H1 (cell line): ENCODE measurements at regions of chr12 and their contacts with region 1.

Region 1: GRCh38 chr12:54294152-54294952 is 6.5 kb downstream of the NFE2 start:
- DNase-seq: peak in 1 of 2 experiments; percentile 94
- H3K4me3 ChIP-seq: no peak overlapping the region
- H3K27ac ChIP-seq: no peak overlapping the region
- H3K4me1 ChIP-seq: peaks cover 0 to 2% (median 0%) of the 10 kb centered on the region in 4 experiments; a peak in 1 of 7 replicates
- H3K27me3 ChIP-seq: peaks cover 0 to 4% (median 0%) of the 10 kb centered on the region in 4 experiments; a peak in 1 of 7 replicates
- CTCF ChIP-seq: peak; percentile 91 to 95 (median 93)
- EP300 ChIP-seq: no peak
- POLR2A ChIP-seq: no peak
- RAD21 ChIP-seq: peak; percentile 81 to 92

Region 2: GRCh38 chr12:54159140-54159539 is 135.2 kb before region 1 on chr12:
- CTCF ChIA-PET with region 1: no interaction called
- POLR2A ChIA-PET with region 1: no interaction called
- DNase-seq: peak; percentile 61 to 88
- H3K4me3 ChIP-seq: peak overlapping the region in 1 of 4 experiments; percentile 26; a peak in 1 of 8 replicates
- H3K27ac ChIP-seq: no peak overlapping the region
- H3K4me1 ChIP-seq: peaks cover 0 to 19% (median 13%) of the 10 kb centered on the region in 4 experiments; a peak in 6 of 7 replicates
- H3K27me3 ChIP-seq: peaks cover 0 to 16% (median 8%) of the 10 kb centered on the region in 4 experiments; a peak in 5 of 7 replicates
- CTCF ChIP-seq: peak; percentile 33 to 62 (median 57); a peak in 3 of 4 replicates
- EP300 ChIP-seq: no peak
- POLR2A ChIP-seq: no peak
- RAD21 ChIP-seq: peak; percentile 5 to 29; a peak in 2 of 4 replicates

Region 3: DNA sequence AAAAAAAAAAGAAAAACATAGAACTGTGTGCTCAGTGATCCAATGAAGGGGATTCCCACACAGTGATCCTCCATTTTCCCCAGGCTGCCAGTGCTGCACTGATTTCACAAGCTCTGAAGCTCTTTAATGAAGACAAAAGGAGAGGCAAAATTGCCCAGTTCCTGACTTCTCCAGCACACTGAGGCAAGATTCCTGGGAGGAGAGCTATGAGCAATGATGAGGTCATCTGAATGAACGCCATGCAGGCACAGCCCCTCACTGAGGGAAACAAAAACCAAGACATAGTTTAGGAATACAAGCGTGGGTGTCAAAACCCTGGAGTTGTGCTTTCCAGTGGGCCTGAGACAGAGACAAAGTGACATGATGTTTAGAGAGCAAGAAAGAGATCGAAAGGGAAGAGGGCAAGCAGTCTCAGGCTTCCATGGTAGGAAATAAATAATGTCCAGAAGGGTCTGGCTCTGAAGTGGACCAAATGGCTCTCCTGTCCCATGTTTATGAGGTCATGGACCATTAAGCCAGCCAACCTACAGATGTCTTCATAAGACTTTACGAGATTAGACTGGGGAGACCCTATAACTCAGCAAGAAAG is 64.6 kb before region 1 on chr12:
- CTCF ChIA-PET with region 1: interaction called, 10 read pairs
- POLR2A ChIA-PET with region 1: interaction called, 4 read pairs
- DNase-seq: no peak
- H3K4me3 ChIP-seq: no peak overlapping the region
- H3K27ac ChIP-seq: 0 out of 2 replicates have a peak overlapping the region, but pooled peaks have one; percentile 0
- H3K4me1 ChIP-seq: no peaks in the 10 kb centered on the region
- H3K27me3 ChIP-seq: no peaks in the 10 kb centered on the region
- CTCF ChIP-seq: no peak
- EP300 ChIP-seq: no peak
- POLR2A ChIP-seq: no peak
- RAD21 ChIP-seq: no peak

Region 4: DNA sequence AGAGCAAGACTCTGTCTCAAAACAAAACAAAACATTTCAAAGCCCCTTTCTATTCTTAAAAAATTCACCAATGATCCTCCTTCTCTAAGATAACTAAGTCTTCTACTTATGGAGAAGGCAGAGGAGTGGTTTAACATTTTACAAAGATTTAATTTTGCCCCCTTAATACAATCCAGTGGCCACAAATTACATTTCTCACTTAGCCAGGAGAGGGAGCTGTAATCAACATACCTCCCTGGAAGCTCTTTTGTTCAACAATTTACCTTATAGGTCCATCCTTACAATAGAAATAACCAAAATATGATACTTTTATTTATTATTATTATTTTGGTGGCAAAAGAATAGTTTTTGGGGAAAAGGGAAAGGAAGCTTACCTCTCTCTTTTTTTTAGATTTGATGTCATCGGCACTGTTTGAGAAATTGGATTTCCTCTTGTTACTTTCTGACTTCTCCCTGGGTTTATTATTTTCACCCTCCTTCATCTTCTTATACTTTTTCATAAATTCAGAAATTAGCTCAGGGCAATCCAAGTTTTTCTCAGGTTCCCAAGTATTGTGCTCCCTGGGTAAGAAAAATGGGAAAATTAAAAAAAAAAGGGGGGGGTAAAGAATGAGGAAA is 42.6 kb before region 1 on chr12:
- CTCF ChIA-PET with region 1: interaction called, 10 read pairs
- POLR2A ChIA-PET with region 1: interaction called, 1,006 read pairs
- DNase-seq: no peak
- H3K4me3 ChIP-seq: no peak overlapping the region
- H3K27ac ChIP-seq: no peak overlapping the region
- H3K4me1 ChIP-seq: no peaks in the 10 kb centered on the region
- H3K27me3 ChIP-seq: no peaks in the 10 kb centered on the region
- CTCF ChIP-seq: peak in 2 of 3 experiments; percentile 41 to 55; a peak in 2 of 4 replicates
- EP300 ChIP-seq: no peak
- POLR2A ChIP-seq: no peak
- RAD21 ChIP-seq: peak; percentile 56 to 62

Region 5: DNA sequence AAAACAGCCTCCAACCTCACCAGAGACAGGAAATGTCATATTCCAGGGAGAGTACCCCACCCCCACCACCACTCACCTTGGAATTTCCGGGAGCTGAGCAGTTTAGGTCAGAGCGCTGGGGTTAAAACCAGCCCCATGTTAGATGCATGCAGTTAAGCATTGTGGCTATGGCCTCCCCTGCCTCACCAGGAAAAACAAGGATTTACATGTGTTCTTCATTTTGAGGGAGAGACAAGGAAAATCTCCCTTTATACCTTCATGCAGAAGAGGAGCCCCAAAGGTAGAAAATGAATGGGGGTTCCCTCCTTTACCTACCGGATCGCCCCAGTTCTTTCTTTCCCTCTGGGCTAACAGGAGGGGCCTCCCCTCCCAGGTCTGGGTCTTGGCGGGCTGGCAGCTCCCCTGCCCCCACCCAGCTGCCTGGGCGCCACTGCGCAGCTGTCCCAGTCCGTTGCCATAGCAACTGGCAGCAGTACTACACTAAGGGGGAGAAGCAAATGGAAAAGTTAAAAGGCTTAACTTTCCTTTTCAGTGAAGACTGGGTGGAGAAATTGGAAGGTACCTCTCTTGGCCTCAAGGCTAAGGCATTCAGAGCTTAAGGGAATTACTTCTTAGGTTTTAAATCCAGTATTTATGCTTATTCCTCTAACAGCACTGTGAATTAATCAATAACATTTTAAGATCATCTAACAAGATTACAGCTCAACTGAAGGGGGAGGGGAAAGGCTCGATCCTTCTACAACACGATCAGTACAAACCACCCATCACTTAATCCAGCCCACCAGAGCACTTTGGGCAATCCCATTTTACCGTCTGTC is 34.9 kb before region 1 on chr12:
- CTCF ChIA-PET with region 1: interaction called, 10 read pairs
- POLR2A ChIA-PET with region 1: interaction called, 1,006 read pairs
- DNase-seq: peak; percentile 89
- H3K4me3 ChIP-seq: peak overlapping the region; percentile 35 to 56 (median 46)
- H3K27ac ChIP-seq: peak overlapping the region; percentile 97
- H3K4me1 ChIP-seq: peaks cover 3 to 23% (median 15%) of the 10 kb centered on the region in 4 experiments
- H3K27me3 ChIP-seq: no peaks in the 10 kb centered on the region
- CTCF ChIP-seq: no peak
- EP300 ChIP-seq: peak; percentile 59 to 84; a peak in 2 of 3 replicates
- POLR2A ChIP-seq: peak; percentile 84 to 85
- RAD21 ChIP-seq: 0 out of 4 replicates have a peak, but pooled peaks of 1 of the 2 experiments have one; percentile 10

Region 6: GRCh38 chr12:54324617-54325441 is 30.5 kb after region 1 on chr12 and contains the start of gene COPZ1:
- CTCF ChIA-PET with region 1: interaction called, 618 read pairs
- POLR2A ChIA-PET with region 1: interaction called, 19 read pairs
- DNase-seq: peak; percentile 87 to 97
- H3K4me3 ChIP-seq: peak within 1 kb of the TSS; percentile 79 to 97 (median 88)
- H3K27ac ChIP-seq: peak within 1 kb of the TSS; percentile 83
- H3K4me1 ChIP-seq: peaks cover 0 to 10% (median 4%) of the 10 kb centered on the region in 4 experiments; a peak in 2 of 7 replicates
- H3K27me3 ChIP-seq: no peaks in the 10 kb centered on the region
- CTCF ChIP-seq: peak; percentile 57 to 89 (median 81)
- EP300 ChIP-seq: no peak
- POLR2A ChIP-seq: peak; percentile 54 to 87
- RAD21 ChIP-seq: peak; percentile 80 to 82
- total RNA-seq, gene COPZ1: 94.2 and 103 TPM in 2 replicates

Region 7: GRCh38 chr12:54337280-54337842 is 43.0 kb after region 1 on chr12:
- CTCF ChIA-PET with region 1: interaction called, 618 read pairs
- POLR2A ChIA-PET with region 1: interaction called, 18 read pairs
- DNase-seq: no peak
- H3K4me3 ChIP-seq: no peak overlapping the region
- H3K27ac ChIP-seq: no peak overlapping the region
- H3K4me1 ChIP-seq: no peaks in the 10 kb centered on the region
- H3K27me3 ChIP-seq: no peaks in the 10 kb centered on the region
- CTCF ChIP-seq: no peak
- EP300 ChIP-seq: no peak
- POLR2A ChIP-seq: no peak
- RAD21 ChIP-seq: peak in 1 of 2 experiments; percentile 26; a peak in 1 of 4 replicates

Region 8: DNA sequence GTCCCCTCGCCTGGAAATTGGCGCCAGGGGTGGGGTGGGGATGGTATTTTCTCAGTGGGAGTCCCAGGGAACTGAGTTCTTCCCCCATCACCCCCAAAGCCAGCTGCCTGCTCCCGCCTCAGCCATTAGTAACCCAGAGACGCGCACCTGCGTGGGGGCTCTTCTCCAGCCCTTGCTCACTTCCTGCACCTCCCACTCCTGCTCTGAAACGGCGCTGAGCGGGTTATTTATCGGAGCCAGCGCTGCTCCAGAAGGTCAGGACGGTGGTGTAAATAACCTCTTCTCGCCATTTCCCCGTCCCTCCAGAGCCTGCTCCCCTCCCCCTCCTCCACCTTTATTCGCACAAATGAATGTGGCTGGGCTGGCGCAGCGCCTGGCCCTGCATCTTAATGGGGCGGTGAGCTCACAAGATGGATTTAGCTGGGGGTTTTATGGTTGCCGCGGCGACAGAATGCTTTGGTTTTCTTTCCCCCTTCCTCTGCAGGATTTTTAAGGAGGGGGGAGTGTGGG is 57.7 kb after region 1 on chr12:
- CTCF ChIA-PET with region 1: interaction called, 251 read pairs
- POLR2A ChIA-PET with region 1: interaction called, 14 read pairs
- DNase-seq: peak; percentile 50 to 70
- H3K4me3 ChIP-seq: peak overlapping the region; percentile 44 to 64 (median 62)
- H3K27ac ChIP-seq: peak overlapping the region; percentile 61
- H3K4me1 ChIP-seq: peaks cover 27 to 69% (median 33%) of the 10 kb centered on the region in 4 experiments
- H3K27me3 ChIP-seq: peaks cover 0 to 9% (median 4%) of the 10 kb centered on the region in 4 experiments; a peak in 3 of 7 replicates
- CTCF ChIP-seq: no peak
- EP300 ChIP-seq: no peak
- POLR2A ChIP-seq: peak in 1 of 2 experiments; percentile 41; a peak in 1 of 3 replicates
- RAD21 ChIP-seq: no peak